Activated T-helper 2 cell treated with anti-CD3 and anti-CD28 coated beads, Interferon-gamma antibody, Interleukin-2, Interleukin-4, amounts not matched to agents 10 μg/mL and 5 μg/mL and 100 μg/mL, durations not matched to agents 14 hours and 24 hours and 36 hours (primary cell): ENCODE measurements at regions of chr3 and their contacts with region 1.

Region 1: DNA sequence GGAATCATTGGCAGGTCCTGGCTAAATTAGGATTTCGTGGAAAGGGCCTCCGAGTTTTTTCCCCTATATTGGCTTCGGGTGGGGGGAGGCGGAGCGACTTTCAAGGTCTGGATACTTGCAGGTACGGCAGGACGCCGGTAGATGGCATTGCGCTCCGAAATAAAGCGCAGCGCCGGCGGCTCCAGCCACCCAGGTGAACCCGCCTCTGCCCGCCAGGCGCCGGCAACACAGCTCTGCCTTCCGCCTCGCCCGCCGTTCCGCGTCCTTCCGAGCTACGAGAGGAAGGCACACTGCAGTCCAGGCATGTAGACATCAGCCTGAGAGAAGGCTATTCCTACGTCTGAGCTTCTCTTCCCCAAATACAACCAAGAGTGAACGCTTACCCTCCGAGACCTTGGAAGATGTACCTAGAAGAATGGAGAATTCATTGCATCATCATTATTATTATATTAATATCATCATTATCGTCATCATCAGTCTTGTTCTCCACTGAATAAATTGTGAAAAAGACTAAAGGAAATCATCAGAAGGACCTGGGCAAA is 514.1 kb downstream of the MECOM start:
- DNase-seq: peak; percentile 69
- H3K4me3 Mint-ChIP-seq: no peak overlapping the region
- H3K27ac Mint-ChIP-seq: no peak overlapping the region
- H3K4me1 Mint-ChIP-seq: peaks cover 16% of the 10 kb centered on the region
- H3K27me3 Mint-ChIP-seq: peaks cover 73% of the 10 kb centered on the region

Region 2: GRCh38 chr3:169133178-169134161 is 15.9 kb before region 1 on chr3:
- intact Hi-C with region 1: no loop called
- DNase-seq: no peak
- H3K4me3 Mint-ChIP-seq: no peak overlapping the region
- H3K27ac Mint-ChIP-seq: no peak overlapping the region
- H3K4me1 Mint-ChIP-seq: no peaks in the 10 kb centered on the region
- H3K27me3 Mint-ChIP-seq: peaks cover 17% of the 10 kb centered on the region

Region 3: DNA sequence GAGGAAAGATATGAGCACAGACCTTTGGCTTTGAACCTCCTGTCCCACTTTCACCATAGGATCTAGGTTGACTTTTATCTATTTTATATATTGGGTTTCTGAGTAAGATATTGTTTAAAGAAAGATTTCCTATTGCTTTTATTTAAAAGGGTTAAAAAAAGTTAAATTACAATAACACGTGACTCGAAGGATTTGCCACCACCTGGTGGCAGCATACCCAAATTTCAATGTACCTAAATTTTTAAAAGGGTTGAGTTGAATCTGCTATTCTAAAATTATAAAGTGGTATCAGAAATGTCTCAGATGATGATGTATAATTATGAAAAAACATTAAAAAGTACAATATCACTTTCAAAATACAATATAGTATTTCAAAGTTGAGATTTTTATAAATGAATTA is 145.7 kb after region 1 on chr3:
- intact Hi-C with region 1: loop called (anchors 1 kb)
- DNase-seq: no peak
- H3K4me3 Mint-ChIP-seq: no peak overlapping the region
- H3K27ac Mint-ChIP-seq: no peak overlapping the region
- H3K4me1 Mint-ChIP-seq: no peaks in the 10 kb centered on the region
- H3K27me3 Mint-ChIP-seq: peaks cover 2% of the 10 kb centered on the region

Region 4: GRCh38 chr3:169354774-169355501 is 205.5 kb after region 1 on chr3:
- intact Hi-C with region 1: loop called (anchors 10 kb)
- DNase-seq: no peak
- H3K4me3 Mint-ChIP-seq: no peak overlapping the region
- H3K27ac Mint-ChIP-seq: no peak overlapping the region
- H3K4me1 Mint-ChIP-seq: no peaks in the 10 kb centered on the region
- H3K27me3 Mint-ChIP-seq: peaks cover 27% of the 10 kb centered on the region

Region 5: DNA sequence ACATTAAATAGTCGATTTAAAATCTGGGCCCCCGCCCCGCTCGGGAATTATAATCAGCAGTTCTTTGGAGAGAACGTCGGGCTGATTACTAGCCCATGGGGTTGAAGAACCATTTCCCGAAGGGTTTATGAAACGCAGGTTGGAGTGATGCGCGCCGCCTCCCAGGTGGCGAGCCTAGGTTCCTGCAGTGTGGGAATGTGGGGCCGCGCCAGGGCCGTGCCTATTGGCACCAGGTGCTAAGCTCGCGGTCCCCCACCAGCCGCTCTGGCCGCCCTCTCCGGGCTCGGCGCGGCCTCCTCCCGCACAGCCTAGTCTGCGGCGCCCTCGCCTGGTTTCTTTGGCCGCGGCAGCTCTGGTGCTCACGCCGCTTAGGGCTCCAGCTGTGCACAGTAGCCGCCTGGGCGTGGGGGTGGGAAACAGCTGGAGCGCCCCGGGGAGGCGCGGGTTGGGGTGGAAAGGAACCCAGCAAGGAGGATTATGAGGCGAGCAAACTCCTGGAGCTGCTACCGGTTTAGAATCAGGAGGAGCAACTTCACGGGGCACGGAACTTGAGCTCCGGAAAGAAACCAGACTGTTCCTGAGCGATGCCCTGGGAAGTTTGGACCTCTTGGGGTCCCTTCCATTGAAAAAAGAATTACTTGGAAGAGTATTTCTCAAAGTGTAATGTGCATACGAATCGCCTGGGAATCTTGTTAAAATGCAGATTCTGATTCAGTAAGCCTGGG is 519.7 kb after region 1 on chr3:
- intact Hi-C with region 1: loop called (anchors 1 kb)
- DNase-seq: no peak
- H3K4me3 Mint-ChIP-seq: peak overlapping the region; percentile 14
- H3K27ac Mint-ChIP-seq: no peak overlapping the region
- H3K4me1 Mint-ChIP-seq: peaks cover 17% of the 10 kb centered on the region
- H3K27me3 Mint-ChIP-seq: peaks cover 84% of the 10 kb centered on the region

Region 6: GRCh38 chr3:169759256-169759655 is 609.8 kb after region 1 on chr3:
- intact Hi-C with region 1: loop called (anchors 10 kb)
- DNase-seq: no peak
- H3K4me3 Mint-ChIP-seq: no peak overlapping the region
- H3K27ac Mint-ChIP-seq: peak overlapping the region; percentile 40
- H3K4me1 Mint-ChIP-seq: peaks cover 37% of the 10 kb centered on the region
- H3K27me3 Mint-ChIP-seq: peaks cover 3% of the 10 kb centered on the region